Posterior vena cava (tissue), 2 donors: ENCODE measurements at regions of chr3 and their contacts with region 1.

Region 1: DNA sequence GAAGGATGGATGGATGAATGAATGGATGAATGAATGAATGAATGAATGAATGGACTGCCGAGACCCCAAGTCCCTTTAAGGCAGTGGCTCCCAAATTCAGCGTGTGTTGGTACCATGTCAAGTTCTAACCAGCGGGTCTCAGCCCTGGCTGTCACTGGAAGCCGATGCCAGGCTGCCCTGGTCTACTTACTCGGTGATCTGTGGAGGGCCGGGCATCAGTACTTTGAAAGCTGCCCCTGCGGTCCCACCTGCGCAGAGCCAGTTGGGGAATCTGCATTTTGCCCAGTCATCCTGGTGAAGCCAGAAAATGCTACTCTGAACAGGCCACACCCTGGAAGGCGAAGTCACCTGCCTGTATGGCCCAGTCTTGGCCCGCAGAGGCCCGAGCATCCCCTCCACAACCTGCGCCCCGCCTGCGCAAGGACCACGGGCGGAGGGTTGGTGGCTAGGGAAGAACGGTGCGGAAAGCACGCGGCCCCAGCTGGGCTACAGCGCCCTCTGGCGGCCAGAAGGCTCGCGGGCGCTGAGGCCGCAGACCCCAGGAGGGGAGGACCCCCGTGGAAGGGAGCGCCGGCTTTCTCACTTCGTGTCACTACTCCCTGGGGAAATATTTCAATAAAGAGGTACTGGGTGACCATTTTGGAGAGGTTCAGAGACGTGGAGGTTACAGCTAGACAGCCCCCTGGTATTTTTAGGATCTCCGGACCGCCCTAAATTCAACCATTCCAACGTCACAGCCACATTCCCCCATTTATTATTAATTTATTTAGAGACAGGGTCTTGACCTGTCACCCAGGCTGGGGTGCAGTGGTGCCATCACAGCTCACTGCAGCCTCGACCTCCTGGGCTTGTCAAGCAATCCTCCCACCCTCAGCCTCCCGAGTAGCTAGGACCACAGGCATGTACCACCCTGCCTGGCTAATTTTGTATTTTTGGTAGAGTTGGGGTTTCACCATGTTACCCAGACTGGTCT is 34.9 kb downstream of the PRKCD start:
- DNase-seq: peak; percentile 83

Region 2: DNA sequence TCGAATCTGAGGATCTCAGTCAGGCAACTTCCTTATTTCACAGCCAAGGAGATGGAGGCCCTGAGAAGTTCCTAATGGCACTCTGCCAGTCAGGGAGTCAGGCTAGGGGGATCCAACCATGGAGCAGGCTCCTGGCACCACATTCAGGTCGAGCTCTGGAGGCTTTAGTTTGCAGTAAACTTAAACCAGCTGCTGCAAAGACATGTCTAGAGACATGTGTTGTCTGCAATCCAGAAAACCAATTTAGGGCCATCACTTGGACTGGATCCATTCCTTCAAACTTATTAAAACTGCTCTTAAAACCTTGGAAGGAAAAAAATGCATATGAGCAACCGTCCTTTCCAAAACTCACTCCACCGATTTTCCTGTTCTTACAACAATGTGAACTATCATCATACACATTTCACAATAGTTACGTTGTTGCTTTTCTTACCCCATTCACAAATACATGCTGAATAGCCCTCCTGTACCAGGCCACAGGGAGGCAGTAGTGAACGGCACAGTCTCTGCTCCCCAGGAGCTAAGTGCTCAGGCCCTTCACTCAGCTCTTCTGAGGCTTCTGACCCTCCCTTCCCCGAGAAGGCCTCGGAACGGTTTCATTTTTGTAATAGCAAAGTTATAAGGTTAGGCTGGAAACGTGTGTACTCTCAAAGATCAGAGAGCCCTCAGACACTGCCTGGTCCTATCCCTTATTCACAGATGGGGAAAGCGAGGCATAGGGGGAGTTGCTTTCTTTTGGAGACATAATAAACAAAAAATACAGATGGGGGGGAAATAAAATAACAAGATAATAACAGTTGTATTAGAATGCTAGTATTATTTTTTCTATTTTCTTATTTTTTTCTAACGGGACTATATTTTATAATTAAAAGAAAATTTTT is 85.8 kb before region 1 on chr3:
- intact Hi-C with region 1: loop called (anchors 2 to 5 kb)
- DNase-seq: peak; percentile 88

Region 3: GRCh38 chr3:53130179-53131061 is 65.5 kb before region 1 on chr3 and contains the start of gene RFT1:
- intact Hi-C with region 1: loop called (anchors 5 kb)
- DNase-seq: peak; percentile 99
- total RNA-seq, gene RFT1: 13.6 to 15.7 TPM